Colonic mucosa (tissue), 4 donors: ENCODE measurements at regions of chr1 and their contacts with region 1.

Region 1: GRCh38 chr1:58739856-58740466 is 40.1 kb upstream of the MYSM1 start:
- DNase-seq: peak; percentile 35
- H3K4me3 ChIP-seq: no peak overlapping the region
- H3K27ac ChIP-seq: no peak overlapping the region
- H3K4me1 ChIP-seq: no peaks in the 10 kb centered on the region
- H3K27me3 ChIP-seq: no peaks in the 10 kb centered on the region
- CTCF ChIP-seq: peak; percentile 84

Region 2: DNA sequence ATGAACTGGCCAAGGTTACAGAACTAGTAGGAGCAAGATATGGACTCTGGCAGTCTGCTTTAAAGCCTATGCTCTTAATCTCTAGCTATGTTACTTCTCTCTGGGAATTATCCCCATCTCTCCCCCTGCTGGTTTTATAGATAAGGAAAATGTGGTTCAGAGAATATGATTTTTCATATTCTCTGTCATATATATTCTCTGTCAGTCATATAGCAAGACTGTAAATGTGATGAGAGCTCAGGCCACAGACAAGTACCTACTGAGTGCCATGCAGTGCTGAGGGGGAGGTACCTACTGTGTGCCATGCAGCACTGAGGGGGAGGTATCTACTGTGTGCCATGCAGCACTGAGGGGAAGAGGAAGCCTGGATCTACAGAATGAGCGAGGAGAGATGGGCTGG is 336.7 kb after region 1 on chr1:
- intact Hi-C with region 1: no loop called
- DNase-seq: no peak
- H3K4me3 ChIP-seq: no peak overlapping the region
- H3K27ac ChIP-seq: no peak overlapping the region
- H3K4me1 ChIP-seq: no peaks in the 10 kb centered on the region
- H3K27me3 ChIP-seq: no peaks in the 10 kb centered on the region
- CTCF ChIP-seq: no peak

Region 3: DNA sequence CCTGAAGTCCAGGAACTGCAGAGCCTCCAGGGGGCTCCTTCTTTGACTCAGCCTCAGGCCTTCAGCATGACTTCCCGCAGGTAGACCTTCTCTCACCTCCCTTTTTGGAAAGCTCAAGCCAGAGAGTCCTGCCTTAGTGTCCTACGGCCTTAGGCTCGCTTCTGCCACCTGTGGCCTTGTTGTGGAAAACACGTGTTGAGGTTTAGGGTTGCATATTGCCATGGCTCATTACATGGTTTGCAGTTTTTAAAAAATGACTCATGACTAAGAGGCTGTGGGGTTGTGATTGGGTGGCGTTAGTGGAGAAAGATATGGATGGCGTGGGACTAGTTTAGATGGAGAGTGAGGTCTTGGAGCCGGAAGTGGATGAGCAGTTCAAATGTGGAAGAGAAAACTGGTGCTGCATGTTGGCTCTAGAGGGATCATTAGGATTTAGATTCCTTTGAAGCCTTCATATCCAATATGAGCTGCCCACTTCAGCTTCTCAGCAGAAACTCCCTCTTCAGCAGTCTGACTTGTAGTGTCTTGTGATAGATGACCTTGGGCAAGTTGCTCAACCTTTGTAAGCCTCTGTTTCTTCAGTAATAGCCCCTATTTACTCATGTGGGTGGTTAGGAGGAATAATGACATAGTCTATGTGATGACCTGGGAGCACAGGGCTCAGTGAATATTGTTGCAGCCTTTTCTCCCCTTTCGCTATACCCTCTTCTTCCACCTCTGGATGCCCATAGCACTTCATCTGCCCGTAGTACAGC is 550.4 kb after region 1 on chr1:
- intact Hi-C with region 1: loop called (anchors 5 kb)
- DNase-seq: peak; percentile 41
- H3K4me3 ChIP-seq: no peak overlapping the region
- H3K27ac ChIP-seq: no peak overlapping the region
- H3K4me1 ChIP-seq: no peaks in the 10 kb centered on the region
- H3K27me3 ChIP-seq: no peaks in the 10 kb centered on the region
- CTCF ChIP-seq: peak; percentile 37

Region 4: GRCh38 chr1:59699227-59699847 is 959.4 kb after region 1 on chr1:
- intact Hi-C with region 1: loop called (anchors 1 kb)
- DNase-seq: no peak
- H3K4me3 ChIP-seq: no peak overlapping the region
- H3K27ac ChIP-seq: no peak overlapping the region
- H3K4me1 ChIP-seq: no peaks in the 10 kb centered on the region
- H3K27me3 ChIP-seq: no peaks in the 10 kb centered on the region
- CTCF ChIP-seq: peak; percentile 89

Region 5: DNA sequence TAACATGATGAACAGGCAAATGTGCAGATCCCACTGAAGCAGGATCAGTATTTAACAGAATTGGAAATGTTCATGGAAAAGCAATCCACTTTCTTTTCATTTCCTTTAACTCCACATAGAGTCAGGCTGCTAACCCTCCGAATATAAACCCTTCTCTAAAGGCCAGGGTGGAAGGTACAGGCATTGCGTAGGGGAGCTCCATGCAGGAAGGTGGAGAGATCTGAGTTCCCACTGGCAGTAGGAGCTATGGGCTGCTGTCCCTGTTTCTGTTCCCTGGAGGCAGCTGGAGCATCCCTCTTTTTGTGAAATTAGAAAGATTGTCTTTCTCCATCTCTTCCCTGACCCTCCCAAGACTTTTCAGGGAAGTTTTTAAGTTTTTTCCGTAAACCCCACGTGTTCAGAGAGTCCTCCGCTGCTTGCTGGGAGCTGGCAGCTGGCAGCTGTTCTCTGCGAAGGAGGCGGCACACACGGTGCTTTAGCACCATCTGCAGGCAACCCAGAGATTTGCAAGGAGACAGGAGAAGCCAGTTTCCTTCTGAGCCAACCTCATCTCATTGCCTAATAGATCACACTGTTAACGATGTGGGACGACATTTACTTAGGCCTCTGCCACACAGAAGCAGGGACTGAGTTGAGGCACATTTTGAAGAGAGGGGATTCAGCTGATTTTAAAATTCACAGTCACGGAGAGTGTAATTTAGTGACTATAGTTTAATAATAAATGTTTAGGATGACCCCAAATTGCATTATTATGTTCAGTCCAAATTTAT is 1019.4 kb after region 1 on chr1:
- intact Hi-C with region 1: loop called (anchors 5 kb)
- DNase-seq: peak; percentile 83
- H3K4me3 ChIP-seq: no peak overlapping the region
- H3K27ac ChIP-seq: no peak overlapping the region
- H3K4me1 ChIP-seq: no peaks in the 10 kb centered on the region
- H3K27me3 ChIP-seq: no peaks in the 10 kb centered on the region
- CTCF ChIP-seq: peak; percentile 91